Activated B cell treated with CpG ODN at 0.5 μM for 24 hours (primary cell): ENCODE measurements at regions of chr13 and their contacts with region 1.

Region 1: GRCh38 chr13:40130871-40131636 is 475.6 kb downstream of the COG6 start:
- DNase-seq: no peak
- ATAC-seq: no peak
- H3K4me3 Mint-ChIP-seq: no peak overlapping the region
- H3K27ac Mint-ChIP-seq: no peak overlapping the region
- H3K4me1 Mint-ChIP-seq: peaks cover 37% of the 10 kb centered on the region
- H3K27me3 Mint-ChIP-seq: no peaks in the 10 kb centered on the region
- CTCF ChIP-seq: no peak

Region 2: DNA sequence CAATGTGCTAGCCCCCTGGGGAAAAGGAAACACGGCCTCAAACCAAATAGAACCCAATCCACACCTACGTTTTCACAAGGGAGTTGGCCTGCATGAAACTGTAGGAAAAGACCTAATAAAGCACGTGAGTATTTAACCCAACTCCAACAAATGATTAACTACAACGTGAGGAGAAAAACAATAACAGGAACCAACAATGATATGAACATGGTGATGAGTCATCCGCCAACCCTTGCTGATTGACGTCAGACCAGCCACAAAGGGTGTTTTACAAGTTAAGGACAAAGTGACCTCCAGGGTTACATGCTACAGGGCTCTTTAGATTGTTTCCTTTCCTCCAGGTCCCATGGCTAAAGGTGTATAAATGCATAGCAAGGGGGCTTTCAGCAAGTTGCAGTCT is 15.0 kb before region 1 on chr13:
- CTCF ChIA-PET with region 1: no interaction called
- POLR2A ChIA-PET with region 1: interaction called, 3 read pairs
- intact Hi-C with region 1: loop called (anchors 2 kb)
- DNase-seq: no peak
- ATAC-seq: peak; percentile 86
- H3K4me3 Mint-ChIP-seq: no peak overlapping the region
- H3K27ac Mint-ChIP-seq: peak overlapping the region; percentile 36
- H3K4me1 Mint-ChIP-seq: peaks cover 20% of the 10 kb centered on the region
- H3K27me3 Mint-ChIP-seq: no peaks in the 10 kb centered on the region
- CTCF ChIP-seq: no peak

Region 3: GRCh38 chr13:40233731-40234195 is 102.7 kb after region 1 on chr13:
- CTCF ChIA-PET with region 1: no interaction called
- POLR2A ChIA-PET with region 1: no interaction called
- intact Hi-C with region 1: no loop called
- DNase-seq: no peak
- ATAC-seq: no peak
- H3K4me3 Mint-ChIP-seq: no peak overlapping the region
- H3K27ac Mint-ChIP-seq: no peak overlapping the region
- H3K4me1 Mint-ChIP-seq: no peaks in the 10 kb centered on the region
- H3K27me3 Mint-ChIP-seq: no peaks in the 10 kb centered on the region
- CTCF ChIP-seq: no peak

Region 4: GRCh38 chr13:41411522-41411921 is 1280.5 kb after region 1 on chr13:
- CTCF ChIA-PET with region 1: no interaction called
- POLR2A ChIA-PET with region 1: no interaction called
- intact Hi-C with region 1: no loop called
- DNase-seq: no peak
- ATAC-seq: no peak
- H3K4me3 Mint-ChIP-seq: no peak overlapping the region
- H3K27ac Mint-ChIP-seq: no peak overlapping the region
- H3K4me1 Mint-ChIP-seq: no peaks in the 10 kb centered on the region
- H3K27me3 Mint-ChIP-seq: peaks cover 6% of the 10 kb centered on the region
- CTCF ChIP-seq: no peak